Body of pancreas (tissue), 4 donors: ENCODE measurements at regions of chr11 and their contacts with region 1.

Region 1: GRCh38 chr11:126194121-126194543 is 17.3 kb downstream of the RPUSD4 start:
- DNase-seq: peak; percentile 42 to 64 (median 56)
- ATAC-seq: peak; percentile 60
- H3K4me3 ChIP-seq: no peak overlapping the region
- H3K27ac ChIP-seq: no peak overlapping the region
- H3K4me1 ChIP-seq: no peaks in the 10 kb centered on the region
- H3K27me3 ChIP-seq: no peaks in the 10 kb centered on the region
- CTCF ChIP-seq: peak; percentile 43 to 82 (median 77)
- POLR2A ChIP-seq: no peak

Region 2: GRCh38 chr11:125923012-125923579 is 271.0 kb before region 1 on chr11:
- intact Hi-C with region 1: loop called (anchors 5 kb)
- DNase-seq: peak; percentile 66 to 77 (median 70)
- ATAC-seq: peak; percentile 74
- H3K4me3 ChIP-seq: no peak overlapping the region
- H3K27ac ChIP-seq: no peak overlapping the region
- H3K4me1 ChIP-seq: peaks cover 11% of the 10 kb centered on the region
- H3K27me3 ChIP-seq: peaks cover 0 to 7% of the 10 kb centered on the region in 2 donors
- CTCF ChIP-seq: peak; percentile 54 to 81 (median 72)
- POLR2A ChIP-seq: no peak

Region 3: GRCh38 chr11:125941619-125942611 is 252.2 kb before region 1 on chr11:
- intact Hi-C with region 1: loop called (anchors 5 kb)
- DNase-seq: peak; percentile 68 to 79 (median 68)
- ATAC-seq: peak; percentile 82
- H3K4me3 ChIP-seq: no peak overlapping the region
- H3K27ac ChIP-seq: no peak overlapping the region
- H3K4me1 ChIP-seq: peaks cover 6% of the 10 kb centered on the region
- H3K27me3 ChIP-seq: no peaks in the 10 kb centered on the region
- CTCF ChIP-seq: peak; percentile 54 to 76 (median 70)
- POLR2A ChIP-seq: no peak